B cell (primary cell): ENCODE measurements at regions of chr16 and their contacts with region 1.

Region 1: DNA sequence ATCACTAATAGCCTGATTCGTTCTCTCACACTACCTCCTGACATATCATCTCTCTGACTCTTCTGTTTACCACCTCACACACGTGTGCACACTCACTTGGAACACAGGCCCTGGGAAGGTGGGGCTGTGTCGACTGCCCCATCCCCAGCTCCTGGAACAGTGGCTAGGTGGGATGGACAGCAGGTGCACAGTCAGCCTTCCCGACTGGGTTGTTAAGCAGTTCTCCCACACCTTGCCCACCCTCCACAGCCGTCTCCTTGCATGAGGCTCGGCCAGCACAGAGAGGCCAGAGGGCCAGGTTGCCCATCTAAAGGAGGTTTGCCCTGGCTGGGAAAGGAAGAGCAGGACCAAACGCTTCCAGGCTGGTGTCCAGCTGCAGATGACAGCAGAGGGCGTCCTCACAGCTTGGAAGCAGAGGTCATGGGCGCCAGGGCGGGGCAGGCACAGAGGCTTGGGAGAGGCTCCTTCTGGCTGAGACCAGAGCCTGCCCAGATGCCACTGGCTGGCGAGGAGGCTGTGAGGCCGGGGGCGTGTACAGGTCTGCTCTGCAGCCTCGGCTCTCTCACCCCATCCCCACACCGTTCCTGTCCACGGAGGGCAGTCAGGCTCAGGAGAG is 92.8 kb downstream of the AMFR start:
- DNase-seq: no peak
- ATAC-seq: no peak
- H3K4me3 ChIP-seq: no peak overlapping the region
- H3K4me3 Mint-ChIP-seq: no peak overlapping the region
- H3K27ac ChIP-seq: no peak overlapping the region
- H3K27ac Mint-ChIP-seq: no peak overlapping the region
- H3K4me1 ChIP-seq: no peaks in the 10 kb centered on the region
- H3K4me1 Mint-ChIP-seq: no peaks in the 10 kb centered on the region
- H3K27me3 ChIP-seq: no peaks in the 10 kb centered on the region
- H3K27me3 Mint-ChIP-seq: no peaks in the 10 kb centered on the region
- CTCF ChIP-seq: no peak

Region 2: DNA sequence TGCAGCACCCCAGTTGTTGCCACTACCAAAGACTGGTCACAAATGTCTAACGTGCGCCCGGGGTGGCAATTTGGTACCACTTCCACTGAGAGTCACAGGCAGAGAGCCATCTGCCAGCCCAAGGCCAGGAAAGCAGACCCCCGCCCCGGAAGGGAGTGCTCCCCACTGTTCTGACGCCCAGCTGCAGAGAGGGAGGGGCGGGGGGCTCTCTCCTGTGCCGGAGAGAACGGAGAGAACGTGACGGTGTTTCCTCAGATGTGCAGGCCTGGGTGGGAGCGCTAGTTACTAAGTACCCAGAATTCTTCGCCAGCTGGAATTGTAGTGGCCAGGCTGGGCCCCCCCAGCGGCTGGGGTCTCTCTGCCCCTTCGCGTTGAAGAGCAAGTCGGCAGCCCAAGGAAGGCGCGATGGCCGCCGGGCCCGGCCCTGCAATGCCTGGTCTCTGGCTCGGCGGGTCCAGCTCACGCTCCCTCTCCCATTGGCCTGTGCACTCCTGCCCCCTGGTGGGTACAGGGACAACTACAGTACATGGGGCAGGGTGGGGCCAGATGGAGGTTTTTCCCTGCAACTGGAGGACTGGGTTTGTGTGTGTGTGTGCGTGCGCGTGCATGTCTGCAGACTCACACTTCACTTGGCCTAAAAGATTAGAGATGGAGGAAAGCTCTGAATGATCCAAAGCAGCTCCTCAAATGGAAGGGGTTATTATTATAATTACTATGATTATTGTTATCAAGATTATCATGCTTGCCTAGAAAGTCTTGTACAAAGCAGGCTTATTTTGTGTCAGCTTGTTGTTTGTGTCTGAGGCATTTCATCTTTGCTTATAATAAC is 14.4 kb before region 1 on chr16:
- CTCF ChIA-PET with region 1: interaction called, 16 read pairs
- POLR2A ChIA-PET with region 1: no interaction called
- intact Hi-C with region 1: no loop called
- DNase-seq: peak; percentile 75
- ATAC-seq: peak; percentile 98
- H3K4me3 ChIP-seq: peak overlapping the region in 2 of 5 experiments; percentile 12 to 15
- H3K4me3 Mint-ChIP-seq: peak overlapping the region; percentile 39
- H3K27ac ChIP-seq: no peak overlapping the region
- H3K27ac Mint-ChIP-seq: no peak overlapping the region
- H3K4me1 ChIP-seq: peaks cover 3 to 11% of the 10 kb centered on the region in 2 donors
- H3K4me1 Mint-ChIP-seq: peaks cover 13% of the 10 kb centered on the region
- H3K27me3 ChIP-seq: peaks cover 0 to 5% (median 0%) of the 10 kb centered on the region in 4 experiments
- H3K27me3 Mint-ChIP-seq: peaks cover 9% of the 10 kb centered on the region
- CTCF ChIP-seq: peak; percentile 98

Region 3: DNA sequence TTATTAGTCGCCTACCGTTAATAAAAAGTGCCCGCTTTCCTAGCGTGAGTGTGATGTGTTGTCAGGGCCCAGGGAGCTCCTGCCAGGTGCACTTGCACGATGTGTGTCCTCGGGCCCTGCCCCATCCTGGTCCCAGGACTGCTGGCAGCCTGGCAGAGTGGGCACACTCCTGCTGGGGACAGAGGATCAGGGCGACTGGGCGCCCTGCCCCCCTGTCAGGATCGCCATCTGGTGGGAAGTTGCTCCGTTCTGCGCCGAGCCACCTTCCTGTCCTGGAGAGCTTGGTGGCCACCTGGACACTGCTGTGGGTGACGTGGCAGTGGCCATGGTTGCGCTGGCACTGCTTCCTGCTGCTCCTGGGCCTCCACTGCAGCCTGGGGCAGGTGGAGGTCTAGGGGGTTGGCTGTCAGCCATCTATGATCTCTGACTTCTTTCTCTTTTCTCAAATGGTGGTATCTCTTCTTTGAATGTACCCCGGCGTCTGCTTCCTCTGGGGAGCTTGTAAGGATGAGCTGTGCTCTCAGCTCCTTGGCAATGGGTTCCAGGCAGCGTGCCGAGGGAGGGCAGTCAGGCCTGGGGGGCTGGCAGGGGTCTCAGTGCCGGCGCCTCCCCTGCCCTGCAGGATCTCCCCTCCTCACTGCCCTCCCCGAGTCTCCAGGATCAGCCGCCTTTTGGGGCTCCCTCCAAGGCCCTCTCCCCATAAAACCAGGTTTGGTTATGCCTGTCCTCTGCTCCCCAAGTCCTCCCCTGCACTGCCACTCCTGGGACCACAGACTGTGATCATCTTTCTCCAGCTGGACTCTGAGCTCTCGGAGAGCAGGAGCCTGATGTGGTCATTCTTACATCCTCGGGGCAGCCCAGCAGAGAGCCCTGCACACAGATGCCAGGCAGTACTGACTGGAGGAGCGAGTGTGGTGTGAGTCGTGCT is 15.8 kb after region 1 on chr16:
- CTCF ChIA-PET with region 1: no interaction called
- POLR2A ChIA-PET with region 1: no interaction called
- intact Hi-C with region 1: no loop called
- DNase-seq: no peak
- ATAC-seq: no peak
- H3K4me3 ChIP-seq: no peak overlapping the region
- H3K4me3 Mint-ChIP-seq: no peak overlapping the region
- H3K27ac ChIP-seq: no peak overlapping the region
- H3K27ac Mint-ChIP-seq: no peak overlapping the region
- H3K4me1 ChIP-seq: no peaks in the 10 kb centered on the region
- H3K4me1 Mint-ChIP-seq: no peaks in the 10 kb centered on the region
- H3K27me3 ChIP-seq: no peaks in the 10 kb centered on the region
- H3K27me3 Mint-ChIP-seq: peaks cover 7% of the 10 kb centered on the region
- CTCF ChIP-seq: no peak